PC-3 (cell line): ENCODE measurements at regions of chr5 and their contacts with region 1.

Region 1: GRCh38 chr5:103744159-103744558 is 181.6 kb upstream of the NUDT12 start:
- DNase-seq: peak; percentile 96
- ATAC-seq: peak; percentile 95
- H3K4me3 ChIP-seq: peak overlapping the region; percentile 46
- H3K27ac ChIP-seq: peak overlapping the region; percentile 49
- H3K4me1 ChIP-seq: peaks cover 21% of the 10 kb centered on the region
- H3K27me3 ChIP-seq: no peaks in the 10 kb centered on the region
- CTCF ChIP-seq: no peak

Region 2: GRCh38 chr5:103617913-103618312 is 126.2 kb before region 1 on chr5:
- CTCF ChIA-PET with region 1: no interaction called
- POLR2A ChIA-PET with region 1: no interaction called
- intact Hi-C with region 1: loop called (anchors 2 kb)
- DNase-seq: peak; percentile 46
- ATAC-seq: peak; percentile 85
- H3K4me3 ChIP-seq: no peak overlapping the region
- H3K27ac ChIP-seq: no peak overlapping the region
- H3K4me1 ChIP-seq: peaks cover 20% of the 10 kb centered on the region; the same call in 1 of the 2 replicates
- H3K27me3 ChIP-seq: no peaks in the 10 kb centered on the region
- CTCF ChIP-seq: no peak

Region 3: GRCh38 chr5:103703617-103704016 is 40.5 kb before region 1 on chr5:
- CTCF ChIA-PET with region 1: no interaction called
- POLR2A ChIA-PET with region 1: no interaction called
- intact Hi-C with region 1: loop called (anchors 1 kb)
- DNase-seq: peak; percentile 81
- ATAC-seq: peak; percentile 83
- H3K4me3 ChIP-seq: no peak overlapping the region
- H3K27ac ChIP-seq: no peak overlapping the region
- H3K4me1 ChIP-seq: peaks cover 13% of the 10 kb centered on the region; the same call in 1 of the 2 replicates
- H3K27me3 ChIP-seq: no peaks in the 10 kb centered on the region
- CTCF ChIP-seq: no peak

Region 4: GRCh38 chr5:103758996-103759395 is 14.8 kb after region 1 on chr5:
- CTCF ChIA-PET with region 1: no interaction called
- POLR2A ChIA-PET with region 1: no interaction called
- intact Hi-C with region 1: no loop called
- DNase-seq: no peak
- ATAC-seq: no peak
- H3K4me3 ChIP-seq: no peak overlapping the region
- H3K27ac ChIP-seq: no peak overlapping the region
- H3K4me1 ChIP-seq: no peaks in the 10 kb centered on the region
- H3K27me3 ChIP-seq: no peaks in the 10 kb centered on the region
- CTCF ChIP-seq: no peak

Region 5: GRCh38 chr5:103785569-103785968 is 41.4 kb after region 1 on chr5:
- CTCF ChIA-PET with region 1: no interaction called
- POLR2A ChIA-PET with region 1: no interaction called
- intact Hi-C with region 1: loop called (anchors 1 kb)
- DNase-seq: peak; percentile 24
- ATAC-seq: no peak
- H3K4me3 ChIP-seq: no peak overlapping the region
- H3K27ac ChIP-seq: no peak overlapping the region
- H3K4me1 ChIP-seq: no peaks in the 10 kb centered on the region
- H3K27me3 ChIP-seq: no peaks in the 10 kb centered on the region
- CTCF ChIP-seq: no peak